ENCODE measurements at regions of chr1 and their contacts with region 1.

Region 1: GRCh38 chr1:2545759-2546514 is 10.2 kb upstream of the TNFRSF14 start:
- DNase-seq: peak; percentile 82
- ATAC-seq: peak; percentile 75
- H3K4me3 ChIP-seq: peak overlapping the region; percentile 66 to 70
- H3K27ac ChIP-seq: peak overlapping the region; percentile 93
- H3K4me1 ChIP-seq: peaks cover 24 to 51% of the 10 kb centered on the region in 2 experiments
- H3K27me3 ChIP-seq: no peaks in the 10 kb centered on the region
- CTCF ChIP-seq: no peak
- POLR2A ChIP-seq: peak; percentile 69
- RAD21 ChIP-seq: no peak

Region 2: DNA sequence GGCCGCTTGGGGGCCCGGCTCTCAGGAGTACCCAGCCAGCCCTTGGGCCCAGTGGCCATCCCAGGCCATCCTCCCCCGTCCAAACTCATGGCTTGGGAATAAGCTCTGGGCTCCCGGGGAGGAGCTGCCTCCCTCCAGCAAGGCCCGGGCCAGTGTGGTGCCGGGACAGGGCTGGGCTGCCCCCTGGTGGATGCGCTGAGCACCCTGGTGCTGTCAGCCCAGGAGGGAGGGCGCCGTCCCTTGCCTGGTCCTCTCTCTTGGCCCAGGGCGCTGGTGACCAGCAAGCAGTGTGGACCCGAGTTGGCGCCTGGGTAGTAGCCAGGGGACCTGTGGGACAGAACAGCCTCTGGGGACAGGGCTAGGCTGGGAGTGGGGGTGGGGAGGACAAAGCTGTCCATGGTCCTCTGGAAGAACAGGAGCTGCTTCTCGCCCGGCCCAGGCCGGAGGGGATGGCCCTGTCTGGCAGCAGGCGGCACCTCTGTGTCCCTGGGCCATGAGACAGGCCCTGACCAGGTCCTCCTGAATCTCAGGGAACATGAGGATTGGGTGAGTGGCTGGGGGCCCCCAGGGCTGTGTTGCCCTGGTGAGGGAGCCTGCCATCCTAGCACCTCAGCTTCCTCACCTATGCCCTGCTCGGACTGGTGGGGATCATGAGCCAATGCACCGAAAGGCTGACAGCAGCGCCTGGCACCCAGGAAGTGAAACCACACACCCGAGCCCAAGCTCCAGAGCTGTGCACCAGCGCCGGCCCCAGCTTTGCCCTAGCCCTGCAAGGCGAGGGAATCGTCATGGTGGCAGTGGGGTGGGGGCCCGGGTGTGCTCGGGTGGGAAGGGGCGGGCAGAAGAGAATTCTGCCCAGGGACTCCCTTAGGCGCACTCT is 164.0 kb before region 1 on chr1:
- CTCF ChIA-PET with region 1: no interaction called
- POLR2A ChIA-PET with region 1: no interaction called
- RAD21 ChIA-PET with region 1: interaction called in 1 of 2 experiments, 3 read pairs
- intact Hi-C with region 1: loop called (anchors 1 kb)
- DNase-seq: peak; percentile 28
- ATAC-seq: peak; percentile 93
- H3K4me3 ChIP-seq: no peak overlapping the region
- H3K27ac ChIP-seq: peak overlapping the region; percentile 8; the same call in 1 of the 2 replicates
- H3K4me1 ChIP-seq: 0 out of 4 replicates have a peak, but pooled peaks cover 0 to 6% of the 10 kb centered on the region in 2 experiments
- H3K27me3 ChIP-seq: no peaks in the 10 kb centered on the region
- CTCF ChIP-seq: peak; percentile 88 to 97 (median 91)
- POLR2A ChIP-seq: no peak
- RAD21 ChIP-seq: peak; percentile 98

Region 3: DNA sequence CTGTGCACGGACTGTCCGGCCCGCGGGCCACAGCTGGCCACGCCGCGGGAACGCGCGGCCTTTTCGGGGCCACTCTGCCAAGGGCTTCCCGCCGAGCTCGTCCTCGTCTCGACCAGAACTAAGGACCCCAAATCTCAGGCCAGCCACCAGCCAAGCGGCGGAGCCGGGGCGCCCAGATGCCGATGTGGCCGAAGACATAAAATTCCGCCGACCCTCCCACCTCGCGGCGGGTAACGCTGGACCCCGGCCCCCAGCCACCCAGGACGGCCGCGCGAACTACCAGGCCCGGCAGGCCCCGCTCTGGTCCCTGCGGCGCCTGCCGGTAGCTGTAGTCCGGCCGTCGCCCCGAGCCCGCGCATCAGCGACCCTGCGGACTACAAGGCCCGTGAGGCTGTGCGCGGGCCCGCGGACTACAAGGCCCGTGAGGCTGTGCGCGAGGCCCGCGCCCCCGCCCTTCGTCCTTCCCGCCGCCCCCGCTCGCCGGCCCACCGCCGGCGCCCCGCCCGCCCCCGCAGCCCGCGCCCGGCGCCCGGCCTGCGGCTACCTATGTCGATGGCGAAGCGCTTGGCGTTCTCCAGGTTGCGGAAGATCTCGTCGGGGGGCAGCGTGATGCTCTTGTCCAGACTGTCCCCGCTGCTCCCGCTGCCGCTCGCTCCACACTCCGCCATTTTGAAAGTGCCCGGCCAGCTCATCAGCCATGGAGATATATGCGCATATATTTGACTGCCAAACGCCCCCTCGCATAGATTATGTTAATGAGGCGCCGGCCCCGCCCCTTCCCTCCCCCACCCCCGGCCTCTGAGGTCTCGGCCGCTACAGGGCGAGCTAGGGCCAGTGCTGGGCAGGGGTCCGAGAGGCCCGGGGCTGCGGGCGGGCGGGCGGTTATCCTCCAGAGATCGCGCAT is 19.8 kb before region 1 on chr1 and contains the start of gene PANK4:
- CTCF ChIA-PET with region 1: interaction called, 6 read pairs
- POLR2A ChIA-PET with region 1: interaction called, 13 read pairs
- RAD21 ChIA-PET with region 1: interaction called, 3 to 4 read pairs
- intact Hi-C with region 1: no loop called
- DNase-seq: peak; percentile 83
- ATAC-seq: peak; percentile 97
- H3K4me3 ChIP-seq: peak within 1 kb of the TSS; percentile 97
- H3K27ac ChIP-seq: peak within 1 kb of the TSS; percentile 84
- H3K4me1 ChIP-seq: peaks cover 15 to 20% of the 10 kb centered on the region in 2 experiments; a peak in 3 of 4 replicates
- H3K27me3 ChIP-seq: no peaks in the 10 kb centered on the region
- CTCF ChIP-seq: no peak
- POLR2A ChIP-seq: no peak
- RAD21 ChIP-seq: no peak
- total RNA-seq, gene PANK4: 38.5 TPM

Region 4: GRCh38 chr1:2642560-2643413 is 96.8 kb after region 1 on chr1:
- CTCF ChIA-PET with region 1: no interaction called
- POLR2A ChIA-PET with region 1: no interaction called
- RAD21 ChIA-PET with region 1: no interaction called
- intact Hi-C with region 1: loop called (anchors 2 kb)
- DNase-seq: peak; percentile 73
- ATAC-seq: peak; percentile 84
- H3K4me3 ChIP-seq: peak overlapping the region; percentile 82 to 92
- H3K27ac ChIP-seq: peak overlapping the region; percentile 92
- H3K4me1 ChIP-seq: peaks cover 6 to 28% of the 10 kb centered on the region in 2 experiments; a peak in 3 of 4 replicates
- H3K27me3 ChIP-seq: no peaks in the 10 kb centered on the region
- CTCF ChIP-seq: no peak
- POLR2A ChIP-seq: peak; percentile 42
- RAD21 ChIP-seq: no peak

Region 5: DNA sequence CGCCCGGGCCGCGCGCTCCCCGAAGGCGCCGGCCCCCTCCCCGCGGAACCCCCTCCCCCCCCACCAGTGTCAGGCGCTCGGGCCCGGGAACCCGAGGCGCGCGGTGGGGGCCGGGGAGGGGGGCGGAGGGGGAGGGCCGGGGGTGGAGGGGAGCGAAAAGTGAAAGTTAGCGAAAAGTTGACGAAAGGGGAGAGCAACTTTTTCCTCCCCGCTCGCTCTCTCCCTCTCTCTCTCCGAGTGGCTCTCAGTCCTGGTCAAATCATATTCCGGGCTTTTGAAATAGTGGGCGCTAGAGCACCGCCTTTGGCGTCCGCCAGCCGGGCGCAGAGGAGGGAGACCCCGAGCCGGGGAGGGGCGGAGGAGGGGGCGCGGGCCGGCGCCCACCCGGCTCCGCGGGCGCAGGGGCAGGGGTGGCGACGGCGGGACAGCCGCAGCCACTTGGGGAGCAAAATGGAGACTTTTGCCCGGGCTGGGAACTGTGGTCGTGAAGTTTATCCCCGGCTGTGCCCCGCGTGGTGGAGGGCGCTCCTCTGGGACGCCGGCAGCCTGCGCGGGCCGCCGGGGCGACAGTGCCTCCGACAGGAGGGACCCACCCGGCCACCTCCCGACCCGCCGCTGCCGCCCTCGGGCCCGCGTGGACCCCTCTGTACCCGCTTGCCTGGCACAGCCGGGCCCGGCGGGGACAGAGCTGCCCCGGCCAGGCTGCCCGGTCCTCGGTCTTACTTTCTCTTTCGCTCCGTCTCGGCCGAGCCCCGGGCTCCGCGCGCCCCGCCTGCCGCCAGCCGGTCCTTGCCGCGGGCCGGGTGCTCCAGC is 523.8 kb after region 1 on chr1:
- CTCF ChIA-PET with region 1: no interaction called
- POLR2A ChIA-PET with region 1: no interaction called
- RAD21 ChIA-PET with region 1: no interaction called
- intact Hi-C with region 1: no loop called
- DNase-seq: peak; percentile 26
- ATAC-seq: peak; percentile 72
- H3K4me3 ChIP-seq: peak overlapping the region; percentile 48 to 82
- H3K27ac ChIP-seq: peak overlapping the region; percentile 64
- H3K4me1 ChIP-seq: no peaks in the 10 kb centered on the region; a peak in 1 of 4 replicates
- H3K27me3 ChIP-seq: no peaks in the 10 kb centered on the region
- CTCF ChIP-seq: peak in 2 of 3 experiments; percentile 34 to 39; a peak in 2 of 6 replicates
- POLR2A ChIP-seq: no peak
- RAD21 ChIP-seq: no peak; the same call in 1 of the 2 replicates

Measured in HCT116 (cell line).